HEK293 (cell line): ENCODE measurements at regions of chr17 and their contacts with region 1.

Region 1: GRCh38 chr17:76458580-76459490 is 5.9 kb upstream of the UBE2O start:
- H3K4me3 ChIP-seq: no peak overlapping the region
- H3K27ac ChIP-seq: no peak overlapping the region
- H3K4me1 ChIP-seq: no peaks in the 10 kb centered on the region
- CTCF ChIP-seq: peak; percentile 79

Region 2: DNA sequence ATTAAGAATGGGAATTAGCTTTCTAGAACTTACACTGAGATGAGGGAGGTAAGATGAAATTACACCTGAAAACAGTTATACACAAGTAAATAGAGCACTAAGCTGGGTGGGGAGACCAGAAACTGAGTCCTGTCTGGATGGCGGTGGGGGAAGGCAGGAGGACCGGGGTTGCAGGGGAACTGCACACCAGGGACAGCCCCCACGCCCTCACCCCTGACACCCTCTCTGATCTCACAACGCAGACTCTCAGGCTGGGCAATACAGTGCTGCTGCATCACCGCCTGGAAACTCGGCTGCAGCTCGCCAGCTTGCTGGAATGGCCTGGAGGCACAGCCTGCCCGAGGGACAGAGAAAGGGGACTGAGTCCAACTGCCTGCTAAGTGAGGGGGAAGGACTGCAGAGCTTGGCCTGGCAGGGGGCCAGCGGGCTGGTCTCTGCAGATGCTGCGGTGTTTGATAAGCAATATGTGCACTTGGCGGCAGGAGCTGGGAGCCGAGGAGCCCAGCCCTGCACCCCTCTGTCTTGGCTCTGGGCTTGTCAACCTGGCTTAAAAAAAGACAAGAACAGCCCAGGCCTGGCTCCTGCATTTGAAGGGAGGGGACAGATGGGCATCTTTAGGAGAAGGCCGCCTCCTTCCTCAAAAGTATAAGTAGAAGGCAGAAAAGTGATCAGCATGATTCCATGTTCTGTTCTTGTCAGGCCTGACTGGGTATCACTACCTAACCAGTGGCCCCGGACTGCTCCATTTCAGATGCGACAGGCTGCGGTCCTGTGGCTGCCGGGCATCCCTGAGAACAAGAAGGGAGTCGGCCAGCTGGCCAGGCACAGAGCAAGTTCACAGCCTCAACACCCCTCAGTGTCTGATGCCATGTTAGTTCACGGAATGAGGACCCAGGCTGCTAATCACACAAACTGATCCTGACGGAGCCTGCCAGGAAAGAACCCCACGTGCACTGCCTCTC is 44.2 kb before region 1 on chr17:
- CTCF ChIA-PET with region 1: interaction called, 43 read pairs
- POLR2A ChIA-PET with region 1: interaction called, 3 read pairs
- H3K4me3 ChIP-seq: no peak overlapping the region
- H3K27ac ChIP-seq: peak overlapping the region; percentile 13; the same call in 1 of the 2 replicates
- H3K4me1 ChIP-seq: peaks cover 25% of the 10 kb centered on the region
- CTCF ChIP-seq: no peak

Region 3: DNA sequence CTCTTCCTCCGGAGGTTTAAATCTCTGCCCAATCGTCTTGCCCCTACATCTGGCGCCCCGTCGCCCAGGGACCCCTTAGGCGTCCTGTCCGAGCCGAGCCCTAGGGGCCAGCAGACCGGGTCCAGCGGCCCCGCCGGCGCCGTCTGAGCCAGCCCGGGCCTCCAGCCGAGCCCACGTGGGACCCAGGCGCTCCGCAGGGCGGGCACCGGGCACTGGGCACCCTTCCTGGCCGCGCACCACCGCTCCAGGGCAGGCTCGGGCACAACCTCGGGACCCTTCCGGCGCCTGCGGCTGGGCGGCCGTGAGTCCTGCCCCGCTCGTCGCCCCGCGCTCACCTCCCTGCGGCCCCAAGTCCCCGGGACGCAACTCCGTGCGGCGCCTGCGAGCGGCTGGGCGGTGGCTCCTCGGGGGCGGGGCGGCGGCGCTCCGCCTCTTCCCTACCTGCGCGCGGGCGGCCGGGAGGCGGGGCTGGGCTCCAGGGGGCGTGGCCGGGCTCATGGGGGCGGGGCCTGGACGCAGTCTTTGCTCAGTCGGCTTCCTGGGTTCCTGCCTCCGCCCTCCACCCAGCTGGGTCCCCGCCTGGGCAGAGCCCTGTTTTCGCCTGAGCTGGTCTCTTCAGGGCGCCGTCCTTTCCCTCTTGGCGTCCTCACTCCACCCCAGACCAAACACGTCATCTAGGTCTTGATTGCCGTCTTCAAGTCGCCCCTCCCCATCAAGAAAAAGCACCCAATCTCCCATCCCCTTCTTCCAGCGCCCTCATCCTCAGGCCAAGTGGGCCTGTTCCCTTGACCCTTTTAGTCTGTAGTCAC is 42.4 kb after region 1 on chr17 and contains the start of gene RHBDF2:
- CTCF ChIA-PET with region 1: interaction called, 187 read pairs
- POLR2A ChIA-PET with region 1: interaction called, 5 read pairs
- H3K4me3 ChIP-seq: peak within 1 kb of the TSS; percentile 66
- H3K27ac ChIP-seq: peak within 1 kb of the TSS; percentile 39; the same call in 1 of the 2 replicates
- H3K4me1 ChIP-seq: peaks cover 16% of the 10 kb centered on the region
- CTCF ChIP-seq: no peak

Region 4: DNA sequence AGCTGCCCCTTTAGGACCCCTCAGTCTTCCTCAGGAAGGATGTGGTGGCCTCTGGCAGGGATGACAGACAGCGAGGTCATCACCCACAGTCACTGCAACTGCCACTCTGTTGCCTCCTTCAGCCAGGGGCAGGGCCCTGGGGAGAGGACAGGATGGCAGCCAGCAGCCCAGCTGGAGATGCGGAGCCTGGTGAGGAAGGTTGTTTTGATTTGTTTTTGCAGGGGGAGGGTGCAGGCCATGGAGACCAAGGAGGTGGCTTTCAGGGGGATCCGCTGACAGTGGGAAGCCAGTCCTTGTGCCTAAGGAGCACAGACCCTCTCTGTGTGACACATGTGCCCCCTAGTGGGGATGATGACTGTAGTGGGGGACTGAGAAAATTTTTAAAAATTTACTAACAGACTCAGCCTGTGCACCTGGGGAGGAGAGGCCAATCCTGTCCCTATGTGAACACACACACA is 88.4 kb after region 1 on chr17:
- CTCF ChIA-PET with region 1: interaction called, 10 read pairs
- POLR2A ChIA-PET with region 1: interaction called, 3 read pairs
- H3K4me3 ChIP-seq: no peak overlapping the region
- H3K27ac ChIP-seq: no peak overlapping the region
- H3K4me1 ChIP-seq: peaks cover 21% of the 10 kb centered on the region
- CTCF ChIP-seq: peak; percentile 86

Region 5: GRCh38 chr17:77076124-77076872 is 617.5 kb after region 1 on chr17:
- CTCF ChIA-PET with region 1: no interaction called
- POLR2A ChIA-PET with region 1: no interaction called
- H3K4me3 ChIP-seq: no peak overlapping the region
- H3K27ac ChIP-seq: no peak overlapping the region; the same call in 1 of the 2 replicates
- H3K4me1 ChIP-seq: peaks cover 4% of the 10 kb centered on the region; the same call in 1 of the 2 replicates
- CTCF ChIP-seq: no peak